ENCODE measurements at regions of chr1 and their contacts with region 1.

Region 1: GRCh38 chr1:168342572-168343280 is 62.0 kb downstream of the TBX19 start:
- DNase-seq: peak; percentile 73
- ATAC-seq: peak; percentile 97
- H3K4me3 ChIP-seq: peak overlapping the region in 1 of 2 experiments; percentile 35; a peak in 2 of 4 replicates
- H3K27ac ChIP-seq: no peak overlapping the region
- H3K4me1 ChIP-seq: peaks cover 2% of the 10 kb centered on the region; the same call in 1 of the 2 replicates
- H3K27me3 ChIP-seq: peaks cover 3% of the 10 kb centered on the region; the same call in 1 of the 2 replicates
- CTCF ChIP-seq: peak; percentile 81

Region 2: DNA sequence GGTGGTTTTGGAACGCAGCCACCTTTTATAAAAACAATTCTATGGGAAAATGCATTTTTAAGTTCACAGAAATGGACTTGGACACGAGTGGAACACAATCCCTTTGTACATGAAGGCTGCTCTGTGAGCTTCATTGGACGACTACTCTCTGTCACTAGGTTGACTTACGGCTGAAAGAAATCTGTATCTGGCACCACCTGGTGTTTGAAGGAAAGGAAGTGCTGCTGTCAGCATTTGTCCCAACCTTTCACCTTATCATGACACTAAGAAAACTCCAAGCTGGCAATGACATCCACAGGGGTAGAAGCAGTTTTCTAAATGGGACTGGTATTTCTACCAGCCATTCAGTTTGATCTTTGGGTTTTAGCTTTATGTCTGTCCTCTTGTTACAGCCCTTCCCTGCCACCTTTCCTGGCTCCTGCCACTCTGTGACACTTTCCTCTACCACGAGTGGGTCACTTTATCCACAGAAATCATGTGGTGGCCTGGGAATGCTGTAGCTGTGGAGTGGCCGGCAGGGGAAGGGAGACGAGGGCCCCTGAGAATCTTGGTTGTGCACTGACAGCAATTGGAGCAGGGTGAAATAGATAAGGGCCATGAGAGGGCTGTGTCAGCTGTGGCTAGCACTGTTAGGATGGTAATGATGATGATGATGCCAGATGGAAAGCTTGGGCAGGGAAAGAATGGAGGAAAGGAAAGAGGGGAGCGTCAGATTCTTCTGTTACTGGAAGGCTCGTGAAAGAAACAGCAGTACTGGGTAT is 23.2 kb after region 1 on chr1:
- CTCF ChIA-PET with region 1: no interaction called
- POLR2A ChIA-PET with region 1: no interaction called
- in situ Hi-C with region 1: no loop called
- intact Hi-C with region 1: no loop called
- DNase-seq: no peak
- ATAC-seq: no peak
- H3K4me3 ChIP-seq: no peak overlapping the region
- H3K27ac ChIP-seq: no peak overlapping the region
- H3K4me1 ChIP-seq: no peaks in the 10 kb centered on the region
- H3K27me3 ChIP-seq: peaks cover 6% of the 10 kb centered on the region; the same call in 1 of the 2 replicates
- CTCF ChIP-seq: peak; percentile 24

Region 3: DNA sequence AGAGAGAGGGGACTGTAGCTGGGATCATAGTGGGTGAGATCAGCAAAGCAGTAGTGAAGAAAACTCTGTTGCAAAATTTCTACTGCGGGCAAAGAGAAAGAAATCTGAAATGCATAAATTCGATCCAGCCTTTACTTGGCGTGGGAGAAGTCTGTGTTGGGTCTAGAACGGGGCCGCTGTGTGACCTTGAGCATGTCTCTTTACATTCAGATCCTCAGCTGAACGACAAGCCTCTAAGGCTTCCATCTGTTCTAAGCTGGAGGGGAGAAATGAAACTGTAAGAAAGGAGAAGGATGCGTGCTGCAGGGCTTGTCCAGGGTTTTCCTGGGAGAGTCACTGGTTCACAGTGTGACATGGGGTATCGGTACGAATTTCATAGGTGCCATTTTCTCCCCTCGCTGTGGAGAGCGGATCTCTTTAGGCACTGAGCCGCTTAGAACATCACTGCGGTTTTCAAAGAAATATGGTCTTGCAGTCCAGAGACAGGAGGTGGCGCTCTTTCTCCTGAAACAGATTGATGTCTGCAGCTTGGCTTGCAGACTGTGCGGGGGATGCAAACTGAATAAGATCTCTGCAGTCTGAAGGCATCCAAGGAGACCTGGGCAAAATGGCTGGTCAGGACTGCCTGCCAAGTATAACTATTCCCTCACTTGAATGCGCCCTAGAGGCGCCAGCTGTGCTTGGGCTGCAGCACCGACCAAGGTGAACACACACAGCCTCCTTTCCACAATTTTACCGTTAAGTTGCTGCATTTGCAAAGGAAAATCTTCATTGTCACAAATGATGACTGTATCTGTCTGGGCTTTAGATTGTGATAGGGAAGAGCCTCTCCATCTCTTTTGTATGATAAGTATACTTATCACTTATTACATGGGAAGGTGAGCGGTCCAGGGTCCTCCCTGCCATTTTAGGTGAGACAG is 97.0 kb after region 1 on chr1:
- CTCF ChIA-PET with region 1: interaction called, 6 read pairs
- POLR2A ChIA-PET with region 1: interaction called, 3 read pairs
- in situ Hi-C with region 1: no loop called
- intact Hi-C with region 1: loop called (anchors 5 kb)
- DNase-seq: peak; percentile 36
- ATAC-seq: peak; percentile 91
- H3K4me3 ChIP-seq: peak overlapping the region in 1 of 2 experiments; percentile 31; a peak in 2 of 4 replicates
- H3K27ac ChIP-seq: no peak overlapping the region
- H3K4me1 ChIP-seq: no peaks in the 10 kb centered on the region
- H3K27me3 ChIP-seq: no peaks in the 10 kb centered on the region; the same call in 1 of the 2 replicates
- CTCF ChIP-seq: peak; percentile 84

Region 4: DNA sequence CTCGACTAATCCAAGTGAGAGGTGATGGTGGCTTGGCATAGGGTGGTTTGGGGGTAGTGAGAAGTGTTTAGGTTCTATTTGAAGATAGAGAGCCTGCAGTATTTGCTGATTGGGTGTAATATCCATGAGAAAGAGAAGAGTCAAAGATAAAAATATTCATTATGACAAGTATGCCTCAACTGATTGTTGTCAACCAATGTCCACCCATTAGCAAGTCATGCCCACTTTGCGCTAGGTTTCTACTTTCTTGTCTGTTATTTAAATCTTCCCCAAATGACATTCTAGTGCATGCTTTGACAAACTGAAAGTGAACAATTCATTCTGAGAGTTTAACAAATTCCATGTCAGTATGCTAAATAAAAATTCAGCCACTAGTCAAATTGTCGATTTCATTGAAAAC is 229.9 kb after region 1 on chr1:
- CTCF ChIA-PET with region 1: interaction called, 3 read pairs
- POLR2A ChIA-PET with region 1: no interaction called
- in situ Hi-C with region 1: no loop called
- intact Hi-C with region 1: loop called (anchors 5 kb)
- DNase-seq: no peak
- ATAC-seq: no peak
- H3K4me3 ChIP-seq: no peak overlapping the region
- H3K27ac ChIP-seq: no peak overlapping the region
- H3K4me1 ChIP-seq: no peaks in the 10 kb centered on the region
- H3K27me3 ChIP-seq: peaks cover 5% of the 10 kb centered on the region
- CTCF ChIP-seq: no peak

Region 5: GRCh38 chr1:169809370-169810095 is 1466.8 kb after region 1 on chr1:
- CTCF ChIA-PET with region 1: no interaction called
- POLR2A ChIA-PET with region 1: no interaction called
- in situ Hi-C with region 1: no loop called
- intact Hi-C with region 1: no loop called
- DNase-seq: no peak
- ATAC-seq: peak; percentile 71; the same call in 1 of the 2 replicates
- H3K4me3 ChIP-seq: no peak overlapping the region
- H3K27ac ChIP-seq: no peak overlapping the region
- H3K4me1 ChIP-seq: no peaks in the 10 kb centered on the region
- H3K27me3 ChIP-seq: no peaks in the 10 kb centered on the region
- CTCF ChIP-seq: peak; percentile 73